ENCODE measurements at regions of chrX and their contacts with region 1.

Region 1: GRCh38 chrX:39814391-39814790 is 283.4 kb downstream of the BCOR start:
- DNase-seq: peak; percentile 38
- ATAC-seq: no peak
- H3K4me3 ChIP-seq: no peak overlapping the region
- H3K27ac ChIP-seq: peak overlapping the region; percentile 31; the same call in 1 of the 2 replicates
- H3K4me1 ChIP-seq: peaks cover 44% of the 10 kb centered on the region
- H3K27me3 ChIP-seq: no peaks in the 10 kb centered on the region
- CTCF ChIP-seq: peak; percentile 68

Region 2: GRCh38 chrX:39896951-39897740 is 82.8 kb after region 1 on chrX:
- CTCF ChIA-PET with region 1: no interaction called
- POLR2A ChIA-PET with region 1: no interaction called
- intact Hi-C with region 1: loop called (anchors 5 kb)
- DNase-seq: peak; percentile 72
- ATAC-seq: peak; percentile 31
- H3K4me3 ChIP-seq: no peak overlapping the region; the same call in 1 of the 2 replicates
- H3K27ac ChIP-seq: peak overlapping the region; percentile 90
- H3K4me1 ChIP-seq: peaks cover 52% of the 10 kb centered on the region
- H3K27me3 ChIP-seq: no peaks in the 10 kb centered on the region
- CTCF ChIP-seq: no peak

Region 3: GRCh38 chrX:39953883-39954282 is 139.5 kb after region 1 on chrX:
- CTCF ChIA-PET with region 1: no interaction called
- POLR2A ChIA-PET with region 1: no interaction called
- intact Hi-C with region 1: loop called (anchors 10 kb)
- DNase-seq: peak; percentile 94
- ATAC-seq: peak; percentile 99
- H3K4me3 ChIP-seq: no peak overlapping the region
- H3K27ac ChIP-seq: peak overlapping the region; percentile 70
- H3K4me1 ChIP-seq: peaks cover 27% of the 10 kb centered on the region
- H3K27me3 ChIP-seq: no peaks in the 10 kb centered on the region
- CTCF ChIP-seq: no peak

Region 4: DNA sequence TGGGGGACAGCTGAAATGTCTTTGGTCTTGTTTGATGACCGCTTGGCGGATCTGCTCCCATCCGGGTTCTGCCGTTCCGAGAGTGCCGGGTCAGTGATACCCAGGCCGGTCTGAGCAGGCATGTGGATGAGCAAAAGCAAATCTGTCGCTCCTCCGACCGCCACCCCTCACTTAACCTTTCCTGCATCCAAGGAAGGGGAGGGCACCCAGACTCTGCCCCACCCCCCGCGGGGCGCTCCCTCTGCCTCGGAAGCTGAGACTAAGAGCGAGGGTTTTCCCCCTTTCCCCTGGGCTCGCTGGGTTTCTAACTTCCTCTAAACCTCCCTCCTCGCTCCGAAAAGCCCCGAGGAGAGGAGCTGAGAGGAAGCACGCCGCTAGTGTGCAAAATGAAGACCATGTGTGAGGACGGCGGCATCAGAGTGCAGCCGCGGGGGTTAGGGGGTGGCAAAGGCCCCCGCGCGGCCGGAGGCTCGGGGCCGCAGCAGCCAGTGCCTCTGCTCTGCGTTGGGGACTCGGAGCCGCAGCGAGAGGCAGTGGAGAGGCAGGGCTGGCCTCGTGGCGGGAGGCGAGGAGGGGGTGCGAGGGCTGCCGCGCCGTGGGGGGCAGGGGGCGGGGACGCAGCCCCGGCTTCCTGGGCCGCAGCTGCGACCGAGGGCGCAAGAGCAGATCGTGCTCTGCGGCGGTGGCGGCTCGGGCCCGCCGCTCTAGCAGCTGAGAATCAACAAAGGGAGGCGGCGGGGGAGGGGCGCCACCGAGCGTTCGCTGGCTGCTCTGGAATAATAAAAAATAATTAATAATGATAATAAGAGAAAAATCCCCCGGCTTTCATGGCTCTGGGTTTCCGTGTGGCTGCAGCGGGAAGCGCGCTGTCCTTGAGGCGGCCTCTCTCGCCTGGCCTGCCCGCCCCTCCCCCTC is 339.2 kb after region 1 on chrX:
- CTCF ChIA-PET with region 1: no interaction called
- POLR2A ChIA-PET with region 1: no interaction called
- intact Hi-C with region 1: loop called (anchors 5 kb)
- DNase-seq: peak; percentile 36
- ATAC-seq: peak; percentile 2; the same call in 1 of the 2 replicates
- H3K4me3 ChIP-seq: peak overlapping the region; percentile 84
- H3K27ac ChIP-seq: no peak overlapping the region
- H3K4me1 ChIP-seq: peaks cover 32% of the 10 kb centered on the region
- H3K27me3 ChIP-seq: no peaks in the 10 kb centered on the region
- CTCF ChIP-seq: 0 out of 2 replicates have a peak, but pooled peaks have one; percentile 8

Region 5: DNA sequence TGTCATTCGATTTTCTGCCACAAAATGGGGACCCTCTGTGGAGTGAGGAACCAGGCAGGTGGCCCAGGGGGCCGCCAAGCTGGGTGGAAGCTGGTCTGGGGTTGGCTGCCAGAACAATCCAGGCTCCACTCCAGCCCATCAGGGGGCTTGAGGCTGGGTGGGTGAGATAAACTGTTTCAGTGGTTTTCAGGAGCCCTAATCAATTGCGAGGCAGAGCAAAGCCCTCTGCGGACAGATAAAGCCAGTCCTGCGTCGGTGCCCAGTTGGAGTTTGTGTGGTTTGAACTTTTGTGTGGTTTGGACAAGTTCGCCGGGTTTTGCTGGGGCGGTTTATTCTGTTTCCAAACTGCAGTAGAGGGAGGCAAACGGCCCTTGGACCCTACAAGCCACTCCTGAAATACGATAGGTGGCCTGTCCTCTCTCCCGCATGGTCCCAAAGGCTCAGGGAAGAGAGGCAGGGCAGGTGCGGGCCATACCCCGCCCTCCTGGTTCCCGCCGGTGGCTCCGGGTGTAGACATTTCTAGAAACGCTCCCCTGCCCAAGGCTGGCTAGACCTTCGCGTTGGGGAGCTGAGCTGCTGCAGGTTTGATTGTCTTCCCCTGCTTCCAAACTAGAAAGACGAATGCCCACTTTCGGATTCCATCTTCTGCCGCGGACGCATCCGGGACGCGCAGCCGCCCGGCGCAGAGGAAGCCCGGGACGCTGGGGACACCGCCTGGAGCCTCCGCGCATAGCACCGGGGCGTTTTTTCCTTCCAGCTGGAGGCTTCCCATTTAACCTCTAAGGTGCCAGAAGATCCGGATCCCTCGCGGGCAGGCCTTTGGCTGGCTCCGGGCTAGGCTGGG is 452.3 kb after region 1 on chrX:
- CTCF ChIA-PET with region 1: no interaction called
- POLR2A ChIA-PET with region 1: no interaction called
- intact Hi-C with region 1: loop called (anchors 10 kb)
- DNase-seq: peak; percentile 71
- ATAC-seq: peak; percentile 92
- H3K4me3 ChIP-seq: peak overlapping the region; percentile 79
- H3K27ac ChIP-seq: no peak overlapping the region
- H3K4me1 ChIP-seq: peaks cover 14% of the 10 kb centered on the region; the same call in 1 of the 2 replicates
- H3K27me3 ChIP-seq: no peaks in the 10 kb centered on the region
- CTCF ChIP-seq: peak; percentile 71

Measured in PC-3 (cell line).